GM18951 (cell line): ENCODE measurements at regions of chr3 and their contacts with region 1.

Region 1: DNA sequence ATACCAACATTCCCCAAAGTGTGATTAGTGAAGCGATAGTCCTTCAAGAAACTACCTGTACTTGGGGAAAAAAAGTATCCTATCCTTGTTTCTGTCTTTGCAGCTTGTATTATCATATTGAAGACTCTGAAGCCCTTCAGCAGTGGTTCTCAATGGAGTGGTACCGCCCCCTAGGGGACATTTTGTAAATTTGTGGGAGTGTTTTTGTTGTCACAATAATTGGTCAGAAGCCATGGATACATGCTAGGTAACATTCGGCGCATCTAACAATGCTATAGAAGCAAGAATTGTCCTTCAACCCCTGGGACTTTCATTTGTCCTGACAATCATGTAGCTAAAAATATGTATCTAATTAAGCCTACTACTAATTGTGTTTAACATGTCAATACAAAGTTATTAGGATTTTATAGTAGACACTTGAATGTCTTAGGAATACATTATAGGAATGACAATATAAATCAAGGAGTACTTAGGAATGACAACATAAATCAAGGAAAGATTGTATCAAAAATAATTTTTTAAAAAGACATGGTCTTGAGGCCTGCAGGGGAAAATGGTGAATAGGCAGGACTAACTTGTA is 53.7 kb downstream of the NMD3 start:
- POLR2A ChIP-seq: no peak

Region 2: GRCh38 chr3:160180581-160181216 is 1094.1 kb before region 1 on chr3:
- in situ Hi-C with region 1: no loop called
- POLR2A ChIP-seq: no peak

Region 3: GRCh38 chr3:161217496-161217895 is 57.3 kb before region 1 on chr3:
- in situ Hi-C with region 1: no loop called
- POLR2A ChIP-seq: no peak

Region 4: DNA sequence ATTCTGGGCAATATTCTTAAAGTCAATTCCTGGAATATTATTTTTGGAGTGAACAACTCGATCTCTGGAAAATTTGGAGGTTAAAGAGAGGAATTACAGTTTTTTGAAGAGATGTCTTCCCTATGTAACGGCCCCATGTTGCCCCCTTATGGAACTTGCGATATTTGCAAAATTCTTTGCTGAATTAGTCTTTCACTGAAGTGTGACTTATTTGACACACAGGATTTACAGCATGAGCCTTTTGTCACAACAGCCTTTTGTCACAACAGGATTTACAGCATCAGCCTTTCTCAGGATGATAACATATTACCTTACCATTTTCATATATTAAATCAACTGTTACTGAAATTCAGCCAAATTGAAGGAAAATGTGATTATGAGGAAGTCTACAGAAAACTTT is 134.3 kb after region 1 on chr3:
- in situ Hi-C with region 1: loop called (anchors 10 kb)
- POLR2A ChIP-seq: no peak

Region 5: DNA sequence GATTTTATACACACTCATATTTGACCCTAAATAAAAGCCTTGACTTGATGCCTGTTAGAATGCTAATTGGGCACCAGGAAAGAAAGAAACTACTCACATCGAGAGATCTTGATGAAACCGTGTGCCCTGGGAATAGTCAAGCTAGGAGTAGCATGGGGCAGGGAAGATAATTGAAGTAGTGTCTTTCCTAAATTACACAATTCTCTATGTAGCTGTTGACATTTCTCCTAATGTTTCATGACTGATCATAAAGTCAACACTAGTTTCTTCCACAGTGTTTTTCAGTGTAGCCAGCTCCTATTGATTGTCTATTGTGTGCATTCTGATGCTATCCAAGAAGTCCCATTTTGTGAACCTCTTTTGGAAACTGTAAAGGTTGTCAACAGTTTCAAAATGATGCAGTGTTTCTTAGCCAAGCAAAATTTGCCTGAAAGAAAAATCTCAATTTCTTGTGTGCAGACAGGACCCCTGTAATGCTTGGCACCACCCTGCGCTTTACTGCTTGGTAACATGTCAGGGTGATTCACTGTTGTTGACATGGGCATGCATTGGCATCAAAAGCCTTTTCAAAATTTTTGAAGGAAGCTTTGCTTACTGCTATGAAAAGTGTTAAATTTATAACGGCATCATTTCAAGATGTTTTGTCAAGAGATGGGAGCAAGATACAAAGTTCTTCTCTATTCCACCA is 169.3 kb after region 1 on chr3:
- in situ Hi-C with region 1: no loop called
- POLR2A ChIP-seq: no peak

Region 6: DNA sequence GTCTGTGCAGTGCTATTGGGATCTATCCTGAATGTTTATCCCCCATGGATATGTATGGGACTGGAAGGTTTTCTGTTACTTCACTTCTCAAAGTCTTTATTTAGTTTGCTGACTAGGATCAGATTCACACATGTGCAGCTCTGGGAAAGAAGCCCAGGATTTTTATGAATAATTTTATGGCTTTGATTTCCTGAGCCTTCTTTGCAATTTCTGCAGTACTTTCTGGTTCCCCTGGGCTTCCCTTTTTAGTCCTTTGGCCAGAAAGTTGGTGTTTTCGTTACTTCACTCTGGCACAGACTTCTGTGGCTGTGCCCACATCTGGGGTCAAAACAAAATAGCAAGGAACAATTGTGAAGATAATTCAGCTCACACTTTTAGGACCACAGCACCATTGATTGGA is 942.8 kb after region 1 on chr3:
- in situ Hi-C with region 1: no loop called
- POLR2A ChIP-seq: no peak